ENCODE measurements at regions of chrX and their contacts with region 1.

Region 1: DNA sequence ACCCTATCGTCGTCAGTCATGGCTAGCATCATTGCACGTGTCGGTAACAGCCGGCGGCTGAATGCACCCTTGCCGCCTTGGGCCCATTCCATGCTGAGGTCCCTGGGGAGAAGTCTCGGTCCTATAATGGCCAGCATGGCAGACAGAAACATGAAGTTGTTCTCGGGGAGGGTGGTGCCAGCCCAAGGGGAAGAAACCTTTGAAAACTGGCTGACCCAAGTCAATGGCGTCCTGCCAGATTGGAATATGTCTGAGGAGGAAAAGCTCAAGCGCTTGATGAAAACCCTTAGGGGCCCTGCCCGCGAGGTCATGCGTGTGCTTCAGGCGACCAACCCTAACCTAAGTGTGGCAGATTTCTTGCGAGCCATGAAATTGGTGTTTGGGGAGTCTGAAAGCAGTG is 1.6 kb downstream of the ZCCHC12 start:
- DNase-seq: no peak
- ATAC-seq: no peak
- H3K4me3 ChIP-seq: no peak overlapping the region
- H3K27ac ChIP-seq: no peak overlapping the region
- H3K4me1 ChIP-seq: no peaks in the 10 kb centered on the region
- H3K27me3 ChIP-seq: peaks cover 46% of the 10 kb centered on the region
- CTCF ChIP-seq: no peak
- POLR2A ChIP-seq: no peak
- RAD21 ChIP-seq: no peak

Region 2: GRCh38 chrX:118049720-118050119 is 775.5 kb before region 1 on chrX:
- CTCF ChIA-PET with region 1: no interaction called
- POLR2A ChIA-PET with region 1: no interaction called
- dilution Hi-C with region 1: no loop called
- in situ Hi-C with region 1: no loop called
- intact Hi-C with region 1: loop called (anchors 5 kb)
- DNase-seq: no peak
- ATAC-seq: no peak
- H3K4me3 ChIP-seq: no peak overlapping the region
- H3K27ac ChIP-seq: no peak overlapping the region
- H3K4me1 ChIP-seq: no peaks in the 10 kb centered on the region
- H3K27me3 ChIP-seq: no peaks in the 10 kb centered on the region
- CTCF ChIP-seq: no peak
- POLR2A ChIP-seq: no peak
- RAD21 ChIP-seq: no peak

Measured in IMR-90 (cell line).